MCF 10A (cell line): ENCODE measurements at regions of chr4 and their contacts with region 1.

Region 1: DNA sequence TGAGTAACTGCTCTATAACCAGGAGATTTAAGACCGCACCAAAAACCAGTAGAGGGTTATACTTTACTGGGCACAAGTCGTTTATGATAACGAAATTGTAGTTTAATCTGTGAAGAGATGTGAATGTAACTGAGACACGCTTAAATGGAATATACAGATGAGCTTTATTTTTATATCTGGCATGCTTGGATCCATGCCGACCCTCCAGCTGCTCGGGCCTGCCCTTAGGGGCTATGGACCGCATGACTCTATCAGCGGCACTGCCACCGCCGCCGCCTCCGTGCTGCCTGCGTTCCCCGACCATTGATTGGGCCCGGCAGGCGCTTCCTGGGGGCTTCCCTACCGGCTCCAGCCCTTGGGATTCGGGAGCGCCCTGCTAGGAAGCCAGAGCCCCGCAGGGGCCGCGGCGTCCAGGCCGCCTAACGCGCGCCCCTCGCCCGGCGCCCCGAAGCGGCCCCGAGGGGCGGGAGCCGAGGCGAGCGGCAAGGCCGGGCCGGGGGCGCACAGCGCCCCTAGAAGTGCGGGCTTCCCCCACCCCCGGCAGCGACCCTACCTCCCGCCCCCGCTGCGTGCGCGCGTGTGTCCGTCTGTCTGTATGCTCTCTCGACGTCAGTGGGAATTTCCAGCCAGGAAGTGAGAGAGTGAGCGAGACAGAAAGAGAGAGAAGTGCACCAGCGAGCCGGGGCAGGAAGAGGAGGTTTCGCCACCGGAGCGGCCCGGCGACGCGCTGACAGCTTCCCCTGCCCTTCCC is at the start of gene NFKB1:
- DNase-seq: peak; percentile 85
- H3K4me3 Mint-ChIP-seq: peak within 1 kb of the TSS; percentile 95
- H3K27ac Mint-ChIP-seq: peak within 1 kb of the TSS; percentile 96
- H3K4me1 Mint-ChIP-seq: peaks cover 17% of the 10 kb centered on the region
- H3K27me3 Mint-ChIP-seq: no peaks in the 10 kb centered on the region
- CTCF ChIP-seq: no peak
- total RNA-seq, gene NFKB1: 40.1 and 70.9 TPM in 2 replicates

Region 2: GRCh38 chr4:102114123-102114630 is 386.7 kb before region 1 on chr4:
- CTCF ChIA-PET with region 1: no interaction called
- POLR2A ChIA-PET with region 1: no interaction called
- intact Hi-C with region 1: no loop called
- DNase-seq: no peak
- H3K4me3 Mint-ChIP-seq: no peak overlapping the region
- H3K27ac Mint-ChIP-seq: no peak overlapping the region
- H3K4me1 Mint-ChIP-seq: no peaks in the 10 kb centered on the region
- H3K27me3 Mint-ChIP-seq: no peaks in the 10 kb centered on the region
- CTCF ChIP-seq: no peak

Region 3: GRCh38 chr4:102285831-102286230 is 215.0 kb before region 1 on chr4:
- CTCF ChIA-PET with region 1: no interaction called
- POLR2A ChIA-PET with region 1: no interaction called
- intact Hi-C with region 1: no loop called
- DNase-seq: peak; percentile 61
- H3K4me3 Mint-ChIP-seq: no peak overlapping the region
- H3K27ac Mint-ChIP-seq: no peak overlapping the region
- H3K4me1 Mint-ChIP-seq: no peaks in the 10 kb centered on the region
- H3K27me3 Mint-ChIP-seq: no peaks in the 10 kb centered on the region
- CTCF ChIP-seq: no peak

Region 4: GRCh38 chr4:102399021-102399420 is 101.8 kb before region 1 on chr4:
- CTCF ChIA-PET with region 1: no interaction called
- POLR2A ChIA-PET with region 1: no interaction called
- intact Hi-C with region 1: no loop called
- DNase-seq: no peak
- H3K4me3 Mint-ChIP-seq: no peak overlapping the region
- H3K27ac Mint-ChIP-seq: no peak overlapping the region
- H3K4me1 Mint-ChIP-seq: no peaks in the 10 kb centered on the region
- H3K27me3 Mint-ChIP-seq: no peaks in the 10 kb centered on the region
- CTCF ChIP-seq: no peak

Region 5: GRCh38 chr4:102439236-102439614 is 61.6 kb before region 1 on chr4:
- CTCF ChIA-PET with region 1: interaction called, 3 read pairs
- POLR2A ChIA-PET with region 1: interaction called, 13 read pairs
- intact Hi-C with region 1: no loop called
- DNase-seq: peak; percentile 97
- H3K4me3 Mint-ChIP-seq: peak overlapping the region; percentile 58
- H3K27ac Mint-ChIP-seq: peak overlapping the region; percentile 99
- H3K4me1 Mint-ChIP-seq: peaks cover 21% of the 10 kb centered on the region
- H3K27me3 Mint-ChIP-seq: no peaks in the 10 kb centered on the region
- CTCF ChIP-seq: no peak

Region 6: DNA sequence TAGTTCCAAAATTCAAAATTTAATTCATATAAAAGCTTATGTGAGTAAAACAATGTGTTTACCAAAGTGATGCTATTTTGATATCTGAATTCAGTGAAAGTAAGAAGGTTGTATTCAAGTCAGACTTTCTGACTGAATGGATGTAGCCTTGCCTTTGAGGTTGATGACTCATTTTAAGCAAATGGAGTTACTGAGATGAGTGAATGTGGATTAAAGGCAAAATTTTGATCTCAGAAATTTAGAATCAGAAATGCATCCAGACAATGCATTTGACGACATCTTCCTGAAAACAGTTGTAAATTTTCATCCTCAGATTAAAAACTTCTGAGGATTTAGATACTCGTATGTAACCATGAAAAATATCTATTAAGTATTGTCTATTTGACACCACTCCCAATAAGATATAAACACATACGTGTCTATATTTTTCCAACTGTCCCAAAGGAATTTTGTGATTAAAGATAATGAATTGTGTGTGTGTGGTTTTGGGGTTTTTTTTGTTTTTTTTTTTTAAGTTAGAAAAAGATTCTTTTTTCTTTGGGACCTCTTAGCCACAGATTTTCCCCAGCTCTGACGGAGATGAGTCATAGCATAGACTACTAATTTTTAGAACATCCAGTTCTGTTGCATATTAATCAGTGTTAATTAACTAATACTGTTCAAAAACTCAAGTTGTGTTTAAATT is 34.7 kb after region 1 on chr4:
- CTCF ChIA-PET with region 1: interaction called, 6 read pairs
- POLR2A ChIA-PET with region 1: interaction called, 43 read pairs
- intact Hi-C with region 1: no loop called
- DNase-seq: peak; percentile 51
- H3K4me3 Mint-ChIP-seq: peak overlapping the region; percentile 21
- H3K27ac Mint-ChIP-seq: peak overlapping the region; percentile 59
- H3K4me1 Mint-ChIP-seq: peaks cover 13% of the 10 kb centered on the region
- H3K27me3 Mint-ChIP-seq: no peaks in the 10 kb centered on the region
- CTCF ChIP-seq: no peak

Region 7: DNA sequence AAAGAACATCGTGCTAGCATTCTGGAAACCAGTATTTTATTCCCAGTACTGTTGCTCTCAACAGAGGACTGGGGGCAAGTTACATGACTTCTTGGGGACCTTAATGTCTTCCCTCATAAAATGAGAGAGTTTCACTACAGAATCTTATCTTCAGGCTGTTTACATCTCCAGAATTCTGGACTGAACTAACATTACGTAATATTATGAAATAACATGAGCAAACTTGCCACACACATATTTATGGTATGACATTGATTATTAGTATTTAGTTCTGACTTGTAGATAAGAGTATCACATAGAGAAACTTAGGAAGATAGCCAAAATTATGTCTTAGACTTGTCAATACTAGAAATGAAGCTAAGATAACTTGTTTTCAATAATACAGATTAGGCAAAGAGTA is 68.3 kb after region 1 on chr4:
- CTCF ChIA-PET with region 1: interaction called, 5 read pairs
- POLR2A ChIA-PET with region 1: interaction called, 32 read pairs
- intact Hi-C with region 1: no loop called
- DNase-seq: peak; percentile 25
- H3K4me3 Mint-ChIP-seq: no peak overlapping the region
- H3K27ac Mint-ChIP-seq: peak overlapping the region; percentile 25
- H3K4me1 Mint-ChIP-seq: peaks cover 7% of the 10 kb centered on the region
- H3K27me3 Mint-ChIP-seq: no peaks in the 10 kb centered on the region
- CTCF ChIP-seq: no peak